Breast epithelium (tissue), 4 donors: ENCODE measurements at regions of chr2 and their contacts with region 1.

Region 1: DNA sequence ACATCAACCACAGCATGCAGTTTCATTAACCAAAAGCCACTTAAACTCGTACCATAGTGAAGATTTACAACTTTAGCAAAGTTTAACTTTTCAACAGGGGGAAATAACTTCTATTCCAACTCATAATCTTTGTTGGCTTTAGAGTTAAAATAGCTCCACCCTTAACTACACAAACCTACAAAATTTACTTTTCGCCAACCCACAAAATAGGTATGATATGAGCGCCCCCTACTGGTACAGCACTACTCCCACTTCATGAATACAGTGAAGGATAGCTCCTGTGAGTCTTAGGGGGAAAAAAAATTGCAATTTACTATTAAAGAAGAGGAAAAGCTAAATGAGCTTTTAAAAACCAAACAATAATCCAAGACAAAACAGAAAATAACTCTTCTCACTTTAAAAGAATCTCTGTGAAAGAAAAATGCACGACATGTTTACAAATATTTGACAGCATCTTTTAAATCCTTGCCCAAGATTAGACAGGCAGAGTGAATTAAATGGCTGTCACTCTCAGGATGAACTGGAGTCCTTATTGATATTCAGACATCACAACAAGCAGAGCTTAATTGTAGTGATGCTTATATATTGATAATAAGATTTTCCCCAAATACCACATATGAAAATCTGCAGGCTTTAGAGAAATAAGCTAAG is 32.2 kb downstream of the TMEFF2 start:
- DNase-seq: peak in 1 of 2 donors; percentile 35
- H3K4me3 ChIP-seq: no peak overlapping the region
- H3K27ac ChIP-seq: no peak overlapping the region
- H3K4me1 ChIP-seq: no peaks in the 10 kb centered on the region
- H3K27me3 ChIP-seq: no peaks in the 10 kb centered on the region
- CTCF ChIP-seq: peak; percentile 76 to 97 (median 84)
- POLR2A ChIP-seq: no peak

Region 2: GRCh38 chr2:190835303-190835930 is 1327.1 kb before region 1 on chr2:
- intact Hi-C with region 1: loop called (anchors 10 kb)
- DNase-seq: peak in 1 of 2 donors; percentile 44
- H3K4me3 ChIP-seq: no peak overlapping the region
- H3K27ac ChIP-seq: no peak overlapping the region
- H3K4me1 ChIP-seq: no peaks in the 10 kb centered on the region
- H3K27me3 ChIP-seq: no peaks in the 10 kb centered on the region
- CTCF ChIP-seq: no peak
- POLR2A ChIP-seq: no peak

Region 3: DNA sequence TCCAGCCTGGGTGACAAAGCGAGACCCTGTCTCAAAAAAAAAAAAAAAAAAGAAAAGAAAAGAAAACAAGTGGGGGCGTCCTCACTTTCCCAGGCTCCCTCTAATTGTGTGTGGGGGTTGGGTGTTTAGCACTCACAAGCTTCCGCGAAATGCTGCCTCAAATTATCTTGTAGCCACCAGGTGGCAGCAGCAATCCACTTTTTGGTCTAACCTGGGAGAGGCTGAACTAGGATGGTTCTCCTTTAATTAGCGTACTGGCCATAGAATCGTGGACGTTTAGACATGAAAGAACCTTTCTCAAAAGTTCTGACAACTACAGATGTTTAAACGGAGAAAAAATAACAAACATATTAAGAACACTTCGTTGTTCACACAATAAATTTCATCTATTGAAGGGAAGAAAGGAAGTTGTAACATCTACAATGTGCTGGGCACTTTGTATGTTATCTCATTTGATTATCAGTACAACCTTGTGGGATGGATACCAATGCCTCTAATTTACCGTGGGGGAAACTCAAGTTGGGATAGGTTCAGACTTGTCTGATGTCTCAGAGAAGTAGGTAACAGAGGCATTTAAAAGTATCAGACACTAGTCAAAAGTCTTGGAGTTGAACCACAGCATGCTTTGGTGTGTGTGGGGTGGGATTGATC is 607.3 kb before region 1 on chr2:
- intact Hi-C with region 1: loop called (anchors 10 kb)
- DNase-seq: peak; percentile 78 to 80
- H3K4me3 ChIP-seq: no peak overlapping the region
- H3K27ac ChIP-seq: no peak overlapping the region
- H3K4me1 ChIP-seq: no peaks in the 10 kb centered on the region
- H3K27me3 ChIP-seq: no peaks in the 10 kb centered on the region
- CTCF ChIP-seq: peak; percentile 64 to 73 (median 71)
- POLR2A ChIP-seq: no peak